ENCODE measurements at regions of chr7 and their contacts with region 1.

Region 1: DNA sequence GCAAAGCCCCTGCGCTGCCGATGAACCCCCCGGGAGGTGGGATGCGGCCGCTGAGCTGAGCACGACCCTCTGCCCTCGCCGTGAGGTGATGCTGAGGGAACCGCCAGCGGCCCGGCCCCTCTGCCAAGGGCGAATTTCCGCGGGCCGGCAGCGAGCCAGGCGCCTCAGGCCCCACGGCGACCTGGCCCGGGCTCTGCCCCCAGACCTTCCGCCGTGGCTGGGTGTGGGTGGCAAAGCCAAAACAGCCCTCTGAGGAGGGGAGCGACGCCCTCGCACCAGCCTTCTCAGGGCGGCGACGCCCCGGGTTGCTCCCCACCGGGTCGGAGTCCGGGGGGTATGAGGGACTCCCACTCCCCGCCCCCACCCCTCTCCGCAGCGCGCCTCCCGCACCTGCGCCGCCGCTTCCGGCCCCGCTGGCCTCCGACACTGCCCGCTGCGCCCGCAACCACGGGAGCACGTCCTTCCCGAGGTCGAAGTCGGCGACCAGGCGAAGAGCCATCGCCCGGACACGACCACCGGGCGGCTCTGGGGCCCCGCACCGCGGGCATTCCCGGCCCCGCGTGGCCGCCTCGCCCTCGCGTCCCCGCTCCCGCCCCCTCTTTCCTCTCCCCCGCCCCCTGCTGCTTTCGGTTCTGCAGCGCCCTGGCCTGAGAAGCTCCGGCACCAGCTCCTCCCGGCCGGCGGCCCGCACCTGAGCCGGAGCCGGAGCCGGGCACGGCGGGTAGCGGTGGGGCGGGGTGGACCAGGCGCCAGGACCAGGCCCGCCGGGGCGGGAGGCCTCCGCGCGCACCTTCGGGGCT is at the start of gene GSAP:
- DNase-seq: peak; percentile 29
- H3K4me3 Mint-ChIP-seq: peak within 1 kb of the TSS; percentile 45
- H3K27ac Mint-ChIP-seq: no peak within 1 kb of the TSS
- H3K4me1 Mint-ChIP-seq: peaks cover 25% of the 10 kb centered on the region
- H3K27me3 Mint-ChIP-seq: peaks cover 36% of the 10 kb centered on the region
- total RNA-seq, gene GSAP: 0.43 and 0.90 TPM in 2 replicates

Region 2: DNA sequence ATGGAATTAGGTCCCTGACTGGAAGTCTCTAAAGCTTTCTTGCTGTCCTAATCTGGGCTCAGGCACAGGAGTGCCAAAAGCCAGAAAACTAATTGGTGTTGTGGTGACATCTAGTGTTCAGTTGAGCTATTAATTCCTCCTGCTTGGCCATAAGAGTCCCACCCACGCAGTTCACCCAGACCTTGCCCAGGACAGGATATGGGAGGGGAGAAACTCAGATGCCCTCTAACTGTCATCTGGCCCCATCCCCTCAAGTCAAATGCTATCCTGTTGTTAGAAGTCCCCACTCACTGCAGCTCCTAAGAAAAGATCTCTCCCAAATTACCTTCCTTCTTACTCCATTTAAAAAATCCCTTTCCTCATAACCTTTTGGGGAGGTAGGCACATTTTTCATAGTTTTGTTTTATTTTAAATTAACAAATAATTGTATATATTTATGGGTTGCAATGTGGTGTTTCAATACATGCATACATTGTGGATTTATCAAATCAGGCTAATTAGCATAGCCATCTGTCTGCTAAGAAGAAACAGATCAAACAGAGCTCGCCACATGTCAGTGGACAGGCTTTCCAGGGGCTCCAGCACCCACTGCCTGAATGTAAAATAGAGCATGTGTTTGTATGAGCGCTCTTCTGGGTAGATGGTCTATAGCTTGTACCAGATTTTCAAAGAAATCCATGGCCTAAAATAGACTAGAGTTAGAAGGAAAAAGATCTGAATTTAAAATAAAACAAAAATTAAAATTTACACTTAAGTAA is 83.9 kb before region 1 on chr7:
- intact Hi-C with region 1: no loop called
- DNase-seq: peak; percentile 31
- H3K4me3 Mint-ChIP-seq: no peak overlapping the region
- H3K27ac Mint-ChIP-seq: no peak overlapping the region
- H3K4me1 Mint-ChIP-seq: peaks cover 38% of the 10 kb centered on the region
- H3K27me3 Mint-ChIP-seq: no peaks in the 10 kb centered on the region

Region 3: GRCh38 chr7:77368974-77369373 is 47.0 kb before region 1 on chr7:
- intact Hi-C with region 1: no loop called
- DNase-seq: no peak
- H3K4me3 Mint-ChIP-seq: no peak overlapping the region
- H3K27ac Mint-ChIP-seq: no peak overlapping the region
- H3K4me1 Mint-ChIP-seq: peaks cover 5% of the 10 kb centered on the region
- H3K27me3 Mint-ChIP-seq: peaks cover 28% of the 10 kb centered on the region

Region 4: DNA sequence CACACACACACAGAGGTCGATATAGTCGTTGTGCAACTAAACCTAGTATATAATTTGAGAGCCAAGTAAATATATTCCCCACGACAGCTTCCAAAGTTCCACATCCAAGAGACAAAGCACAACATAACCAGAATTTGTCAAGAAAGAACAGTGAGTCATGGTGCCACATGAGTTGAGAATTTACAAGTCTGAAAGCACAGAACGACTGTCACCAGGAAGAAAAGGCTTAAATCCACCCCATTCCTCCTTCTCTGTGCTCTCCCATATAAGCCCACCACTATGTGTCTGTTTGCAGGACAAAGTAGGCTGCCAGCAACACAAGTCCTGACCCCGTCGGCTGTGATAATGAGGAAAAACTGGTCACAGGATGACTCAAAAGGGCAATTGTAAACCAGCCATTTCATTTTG is 32.7 kb before region 1 on chr7:
- intact Hi-C with region 1: loop called (anchors 5 kb)
- DNase-seq: no peak
- H3K4me3 Mint-ChIP-seq: no peak overlapping the region
- H3K27ac Mint-ChIP-seq: no peak overlapping the region
- H3K4me1 Mint-ChIP-seq: peaks cover 4% of the 10 kb centered on the region
- H3K27me3 Mint-ChIP-seq: peaks cover 27% of the 10 kb centered on the region

Region 5: GRCh38 chr7:77460057-77460486 is 44.0 kb after region 1 on chr7:
- intact Hi-C with region 1: loop called (anchors 5 kb)
- DNase-seq: no peak
- H3K4me3 Mint-ChIP-seq: no peak overlapping the region
- H3K27ac Mint-ChIP-seq: no peak overlapping the region
- H3K4me1 Mint-ChIP-seq: peaks cover 12% of the 10 kb centered on the region
- H3K27me3 Mint-ChIP-seq: peaks cover 26% of the 10 kb centered on the region

Region 6: GRCh38 chr7:77536413-77537135 is 120.6 kb after region 1 on chr7:
- intact Hi-C with region 1: loop called (anchors 5 kb)
- DNase-seq: peak; percentile 93
- H3K4me3 Mint-ChIP-seq: peak overlapping the region; percentile 87
- H3K27ac Mint-ChIP-seq: peak overlapping the region; percentile 70
- H3K4me1 Mint-ChIP-seq: peaks cover 14% of the 10 kb centered on the region
- H3K27me3 Mint-ChIP-seq: no peaks in the 10 kb centered on the region